CD14-positive monocyte (primary cell): ENCODE measurements at regions of chr1 and their contacts with region 1.

Region 1: GRCh38 chr1:211698161-211699026 is 23.0 kb upstream of the NEK2 start:
- DNase-seq: peak; percentile 45 to 59 (median 55)
- H3K4me3 ChIP-seq: peak overlapping the region in 1 of 3 experiments; percentile 55
- H3K4me3 Mint-ChIP-seq: peak overlapping the region; percentile 65 to 84
- H3K27ac ChIP-seq: no peak overlapping the region
- H3K27ac Mint-ChIP-seq: no peak overlapping the region
- H3K4me1 ChIP-seq: peaks cover 4 to 15% of the 10 kb centered on the region in 2 donors
- H3K4me1 Mint-ChIP-seq: peaks cover 16% of the 10 kb centered on the region
- H3K27me3 ChIP-seq: no peaks in the 10 kb centered on the region
- H3K27me3 Mint-ChIP-seq: peaks cover 6 to 16% (median 7%) of the 10 kb centered on the region in 3 donors
- CTCF ChIP-seq: peak; percentile 98

Region 2: DNA sequence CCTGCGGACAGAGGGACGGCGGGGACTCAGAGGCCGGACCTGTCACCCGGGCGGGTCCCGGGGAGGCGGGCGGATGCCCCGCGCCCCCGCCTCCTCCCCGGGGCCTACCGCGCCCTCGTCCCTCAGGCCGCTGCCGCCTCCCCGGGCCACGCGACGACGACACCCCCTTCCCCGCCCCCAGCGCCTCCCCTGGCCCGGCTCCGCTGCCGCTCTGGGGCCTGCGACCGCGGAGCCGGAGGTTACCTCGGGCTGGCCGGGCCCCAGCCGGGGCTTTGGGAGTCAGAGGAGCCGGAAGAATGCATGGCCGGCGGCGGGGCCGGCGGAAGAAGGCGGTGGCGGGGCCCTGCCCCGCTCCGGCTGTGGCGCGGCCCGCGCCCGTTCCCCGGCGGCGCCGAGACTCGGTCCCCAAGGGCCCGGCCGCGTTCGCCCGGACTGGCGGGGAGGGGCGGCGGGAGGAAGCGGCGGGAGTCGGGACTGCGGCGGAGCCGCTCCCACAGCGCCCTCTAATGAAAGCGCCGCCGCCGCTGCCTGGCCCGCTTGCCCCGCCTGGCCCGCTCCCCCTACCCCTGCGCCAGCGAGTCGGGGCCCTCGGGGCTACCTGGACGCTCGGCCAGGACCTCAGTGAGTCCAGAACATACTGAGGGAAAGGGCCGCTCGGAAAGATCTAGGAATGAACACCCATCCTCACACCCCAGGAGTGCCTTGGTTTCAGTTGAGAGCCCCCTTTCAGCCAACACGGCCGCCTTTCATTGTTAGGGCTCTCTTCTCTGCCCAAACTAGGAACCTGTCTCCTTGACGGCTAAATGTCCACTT is 132.1 kb after region 1 on chr1 and contains the start of gene LPGAT1:
- intact Hi-C with region 1: loop called in 1 of 2 experiments (anchors 2 kb)
- DNase-seq: peak; percentile 54 to 80 (median 70)
- H3K4me3 ChIP-seq: peak within 1 kb of the TSS; percentile 53 to 99 (median 81)
- H3K4me3 Mint-ChIP-seq: peak within 1 kb of the TSS; percentile 89 to 97
- H3K27ac ChIP-seq: peak within 1 kb of the TSS; percentile 29 to 78
- H3K27ac Mint-ChIP-seq: peak within 1 kb of the TSS; percentile 89 to 95 (median 92)
- H3K4me1 ChIP-seq: peaks cover 41 to 56% of the 10 kb centered on the region in 2 donors
- H3K4me1 Mint-ChIP-seq: peaks cover 48% of the 10 kb centered on the region
- H3K27me3 ChIP-seq: no peaks in the 10 kb centered on the region
- H3K27me3 Mint-ChIP-seq: peaks cover 0 to 3% (median 0%) of the 10 kb centered on the region in 3 donors
- CTCF ChIP-seq: peak; percentile 76
- polyA plus RNA-seq, gene LPGAT1: 19.5 to 52.1 (median 40.2) TPM

Region 3: DNA sequence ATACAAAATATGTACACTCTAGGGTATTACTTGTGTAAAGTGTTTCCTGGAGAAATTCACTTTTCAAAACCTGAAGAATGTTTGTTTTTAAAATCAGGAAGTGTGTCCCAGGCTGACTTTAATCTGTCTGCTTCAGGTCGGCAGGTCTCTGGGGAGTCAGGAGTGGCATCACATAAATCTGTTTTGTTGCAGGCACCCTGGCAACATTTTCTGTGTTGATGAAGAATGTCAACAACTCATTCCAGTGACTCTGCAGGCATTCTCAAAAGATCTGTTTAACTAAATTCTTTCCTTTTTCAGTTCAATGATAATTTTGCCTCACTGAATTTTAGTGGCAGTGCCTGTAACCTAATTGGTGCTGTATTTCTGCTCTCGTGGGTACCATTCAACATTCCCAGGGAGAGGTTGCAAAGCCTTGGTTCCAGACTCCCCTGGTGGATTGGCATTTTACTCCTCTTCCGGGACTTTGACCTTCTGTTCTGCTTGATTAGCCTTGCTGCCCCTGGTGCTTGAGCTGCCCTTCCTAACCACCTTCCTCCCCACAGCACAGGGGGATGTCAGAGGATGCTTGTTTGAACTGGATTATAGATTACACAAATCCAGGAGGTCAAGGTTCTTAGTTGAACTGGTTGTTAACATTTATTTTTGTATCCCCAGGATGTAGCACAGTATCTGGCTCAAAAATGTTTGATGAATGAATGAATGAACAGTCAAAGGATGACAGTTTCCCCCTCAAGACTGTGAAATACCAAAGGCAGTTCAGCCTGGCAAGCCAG is 187.5 kb after region 1 on chr1:
- intact Hi-C with region 1: no loop called
- DNase-seq: no peak
- H3K4me3 ChIP-seq: no peak overlapping the region
- H3K4me3 Mint-ChIP-seq: no peak overlapping the region
- H3K27ac ChIP-seq: no peak overlapping the region
- H3K27ac Mint-ChIP-seq: peak overlapping the region in 1 of 7 donors; percentile 23
- H3K4me1 ChIP-seq: no peaks in the 10 kb centered on the region
- H3K4me1 Mint-ChIP-seq: peaks cover 7% of the 10 kb centered on the region
- H3K27me3 ChIP-seq: no peaks in the 10 kb centered on the region
- H3K27me3 Mint-ChIP-seq: peaks cover 0 to 7% (median 2%) of the 10 kb centered on the region in 3 donors
- CTCF ChIP-seq: no peak